Lower leg skin (tissue), 4 donors: ENCODE measurements at regions of chr17 and their contacts with region 1.

Region 1: GRCh38 chr17:8991514-8992285 is 26.2 kb upstream of the PIK3R5 start:
- DNase-seq: peak; percentile 63 to 91
- H3K4me3 ChIP-seq: no peak overlapping the region
- CTCF ChIP-seq: peak in 1 of 3 donors; percentile 72
- POLR2A ChIP-seq: no peak

Region 2: GRCh38 chr17:8572764-8573163 is 418.9 kb before region 1 on chr17:
- intact Hi-C with region 1: no loop called
- DNase-seq: no peak
- H3K4me3 ChIP-seq: no peak overlapping the region
- CTCF ChIP-seq: no peak
- POLR2A ChIP-seq: no peak

Region 3: DNA sequence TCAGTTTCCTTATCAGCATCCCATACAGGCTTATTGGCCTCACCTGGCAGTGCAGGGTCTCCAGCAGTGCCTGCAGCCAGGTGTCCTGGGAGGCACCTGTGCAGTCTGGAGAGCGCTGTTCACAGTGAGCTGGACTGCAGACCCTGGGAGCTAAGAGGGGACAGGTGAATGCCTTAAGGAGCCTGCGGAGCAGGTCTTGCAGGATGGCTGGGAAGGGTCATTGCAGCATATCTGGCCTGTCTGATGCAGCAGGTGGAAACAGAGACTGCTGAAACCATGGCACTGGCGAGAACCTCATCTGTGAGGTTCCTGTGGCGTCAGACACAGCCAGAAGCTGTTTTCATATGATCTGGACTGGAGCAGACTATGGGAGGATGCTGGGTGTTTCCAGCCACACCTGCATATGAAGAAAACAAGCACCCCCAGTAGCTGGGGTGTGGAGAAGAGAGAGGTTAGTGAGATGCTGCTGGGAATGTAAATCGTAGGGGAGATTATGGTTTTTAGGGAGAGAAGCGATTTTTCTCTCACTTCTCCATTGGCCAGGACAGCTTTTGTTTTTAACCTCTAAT is 106.6 kb after region 1 on chr17:
- intact Hi-C with region 1: no loop called
- DNase-seq: no peak
- H3K4me3 ChIP-seq: no peak overlapping the region
- CTCF ChIP-seq: no peak
- POLR2A ChIP-seq: no peak

Region 4: GRCh38 chr17:9291912-9292560 is 300.3 kb after region 1 on chr17:
- intact Hi-C with region 1: loop called (anchors 10 kb)
- DNase-seq: peak in 1 of 2 donors; percentile 83
- H3K4me3 ChIP-seq: no peak overlapping the region
- CTCF ChIP-seq: no peak
- POLR2A ChIP-seq: no peak

Region 5: DNA sequence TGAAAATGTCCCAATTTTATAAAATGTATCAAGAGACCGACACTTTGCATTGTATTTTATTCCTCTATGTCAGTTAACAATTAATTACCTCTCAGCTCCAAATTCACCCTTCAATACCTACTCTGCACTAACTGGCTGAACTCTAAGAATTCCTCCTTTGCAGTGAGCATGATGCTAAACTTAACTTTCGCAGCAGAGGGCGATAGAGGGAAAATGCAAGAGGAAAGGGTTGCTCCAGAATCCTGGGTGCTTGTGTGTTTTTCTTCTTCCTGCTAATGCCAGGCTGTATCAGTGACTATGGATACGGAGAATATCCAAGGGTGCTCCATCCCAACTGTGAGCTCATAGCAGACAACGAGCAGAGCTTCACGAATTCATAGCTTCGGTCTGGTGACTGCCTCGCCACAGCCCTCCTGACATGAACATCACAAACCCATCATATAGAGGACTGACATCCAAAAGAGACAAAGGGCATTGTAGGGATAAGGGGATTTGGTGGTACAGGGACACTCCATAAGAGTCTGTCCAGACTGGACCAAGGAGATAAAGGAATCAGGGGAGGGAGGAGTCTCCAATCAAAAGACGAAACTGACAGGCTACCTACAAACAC is 411.0 kb after region 1 on chr17:
- intact Hi-C with region 1: no loop called
- DNase-seq: no peak
- H3K4me3 ChIP-seq: no peak overlapping the region
- CTCF ChIP-seq: no peak
- POLR2A ChIP-seq: no peak